ENCODE measurements at regions of chr20 and their contacts with region 1.

Region 1: GRCh38 chr20:64119681-64120341 is 12.4 kb upstream of the NPBWR2 start:
- DNase-seq: no peak
- H3K4me3 ChIP-seq: no peak overlapping the region
- H3K27ac ChIP-seq: no peak overlapping the region
- H3K4me1 ChIP-seq: no peaks in the 10 kb centered on the region
- H3K27me3 ChIP-seq: no peaks in the 10 kb centered on the region
- CTCF ChIP-seq: no peak

Region 2: GRCh38 chr20:63980806-63981728 is 138.7 kb before region 1 on chr20 and contains the start of gene PRPF6:
- CTCF ChIA-PET with region 1: no interaction called
- dilution Hi-C with region 1: no loop called
- in situ Hi-C with region 1: no loop called
- intact Hi-C with region 1: loop called (anchors 1 kb)
- DNase-seq: peak; percentile 90
- H3K4me3 ChIP-seq: peak within 1 kb of the TSS; percentile 71 to 94 (median 87)
- H3K27ac ChIP-seq: peak within 1 kb of the TSS; percentile 73
- H3K4me1 ChIP-seq: peaks cover 38% of the 10 kb centered on the region
- H3K27me3 ChIP-seq: no peaks in the 10 kb centered on the region
- CTCF ChIP-seq: peak; percentile 53 to 93
- total RNA-seq, gene PRPF6: 33.5 to 56.9 TPM

Region 3: DNA sequence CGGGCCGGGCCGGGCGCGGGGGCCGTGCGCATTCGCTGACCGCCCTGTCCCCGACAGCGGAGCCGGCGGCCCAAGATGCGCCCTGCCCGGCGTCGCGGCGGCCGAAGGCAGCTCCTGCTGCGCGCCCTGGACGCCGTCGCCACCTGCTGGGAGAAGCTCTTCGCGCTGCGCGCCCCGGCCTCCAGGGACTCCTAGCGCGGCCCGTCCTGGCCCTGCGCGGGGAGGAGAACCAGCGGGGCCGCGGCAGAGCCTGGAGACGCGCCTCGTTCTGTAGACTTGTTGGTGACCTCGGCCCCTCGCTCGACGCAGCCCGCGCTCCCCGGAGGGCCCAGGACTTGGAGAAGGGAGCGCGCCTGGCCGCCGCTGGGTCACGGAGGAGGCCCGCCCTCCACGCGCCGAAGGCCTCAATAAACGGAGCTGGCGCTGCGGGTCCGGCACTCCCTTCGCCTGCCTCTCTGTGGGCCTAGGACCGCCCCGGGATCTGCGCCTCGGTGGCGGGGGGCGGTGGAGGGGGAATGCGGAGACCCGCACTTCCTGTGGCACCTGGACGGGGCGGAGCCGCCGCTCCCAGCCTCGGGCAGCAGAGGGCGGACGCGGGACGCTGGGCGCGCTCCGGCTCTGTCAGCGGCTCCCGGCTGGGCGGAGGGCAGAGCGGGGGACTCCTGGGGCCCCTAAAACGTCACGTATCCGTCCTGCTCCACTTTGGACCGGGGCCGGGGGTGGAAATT is 81.1 kb before region 1 on chr20:
- CTCF ChIA-PET with region 1: no interaction called
- dilution Hi-C with region 1: no loop called
- in situ Hi-C with region 1: no loop called
- intact Hi-C with region 1: loop called (anchors 1 kb)
- DNase-seq: peak; percentile 80
- H3K4me3 ChIP-seq: peak overlapping the region; percentile 4 to 55 (median 44)
- H3K27ac ChIP-seq: no peak overlapping the region
- H3K4me1 ChIP-seq: peaks cover 10% of the 10 kb centered on the region
- H3K27me3 ChIP-seq: no peaks in the 10 kb centered on the region
- CTCF ChIP-seq: peak; percentile 36 to 78

Region 4: GRCh38 chr20:64083378-64083803 is 36.4 kb before region 1 on chr20:
- CTCF ChIA-PET with region 1: no interaction called
- dilution Hi-C with region 1: no loop called
- in situ Hi-C with region 1: no loop called
- intact Hi-C with region 1: loop called (anchors 1 kb)
- DNase-seq: peak; percentile 51
- H3K4me3 ChIP-seq: peak overlapping the region; percentile 36 to 52 (median 45)
- H3K27ac ChIP-seq: no peak overlapping the region
- H3K4me1 ChIP-seq: peaks cover 20% of the 10 kb centered on the region
- H3K27me3 ChIP-seq: peaks cover 7% of the 10 kb centered on the region
- CTCF ChIP-seq: peak; percentile 12 to 64

Region 5: DNA sequence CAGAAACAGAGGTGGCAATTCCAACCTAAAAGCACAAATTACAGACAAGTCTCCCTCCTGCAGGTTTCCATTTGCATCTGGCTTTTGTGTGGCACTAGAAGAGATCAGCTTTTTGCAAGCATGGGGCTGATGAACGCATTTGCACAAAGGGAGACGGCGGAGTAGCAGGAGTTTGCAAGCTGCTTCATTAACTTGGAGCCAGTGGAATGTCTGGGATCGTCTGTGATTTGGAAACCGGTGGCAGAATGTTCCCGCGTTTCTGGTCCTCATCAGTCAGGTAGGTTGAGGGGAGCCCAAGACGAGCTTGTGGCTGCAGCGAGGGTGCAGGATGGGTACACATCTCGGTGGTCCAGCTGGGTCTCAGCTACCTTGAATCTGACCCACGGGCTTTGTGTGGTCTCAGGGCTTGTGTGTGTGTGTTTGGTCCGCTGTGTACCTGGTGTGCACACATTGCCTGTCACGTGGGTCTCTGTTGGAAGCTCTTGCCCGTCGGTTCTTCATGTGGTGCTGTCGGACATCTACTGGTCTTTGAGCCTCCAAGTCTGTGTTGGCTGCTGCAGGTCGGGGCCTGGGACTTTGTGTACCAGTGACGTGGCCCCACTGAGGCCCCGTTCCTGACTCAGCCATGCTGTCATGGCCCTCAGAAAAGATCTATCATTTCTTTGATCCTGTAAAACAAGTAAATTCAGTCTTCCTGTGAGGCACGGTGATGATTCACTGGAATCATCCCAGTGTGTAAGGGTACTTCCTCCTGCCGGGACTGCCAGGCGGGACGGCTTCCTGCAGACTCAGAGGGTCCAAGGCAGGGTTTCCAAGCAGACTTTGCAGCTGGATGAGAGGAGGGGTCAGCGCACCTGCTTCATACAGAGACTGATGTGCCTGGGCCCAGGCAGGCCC is 32.1 kb after region 1 on chr20:
- CTCF ChIA-PET with region 1: no interaction called
- dilution Hi-C with region 1: no loop called
- in situ Hi-C with region 1: no loop called
- intact Hi-C with region 1: no loop called
- DNase-seq: peak; percentile 20
- H3K4me3 ChIP-seq: no peak overlapping the region
- H3K27ac ChIP-seq: no peak overlapping the region
- H3K4me1 ChIP-seq: no peaks in the 10 kb centered on the region
- H3K27me3 ChIP-seq: no peaks in the 10 kb centered on the region
- CTCF ChIP-seq: no peak